HEK293T (cell line): ENCODE measurements at regions of chr6 and their contacts with region 1.

Region 1: GRCh38 chr6:53956068-53956711 is 155.1 kb upstream of the MLIP start:
- DNase-seq: peak; percentile 82

Region 2: DNA sequence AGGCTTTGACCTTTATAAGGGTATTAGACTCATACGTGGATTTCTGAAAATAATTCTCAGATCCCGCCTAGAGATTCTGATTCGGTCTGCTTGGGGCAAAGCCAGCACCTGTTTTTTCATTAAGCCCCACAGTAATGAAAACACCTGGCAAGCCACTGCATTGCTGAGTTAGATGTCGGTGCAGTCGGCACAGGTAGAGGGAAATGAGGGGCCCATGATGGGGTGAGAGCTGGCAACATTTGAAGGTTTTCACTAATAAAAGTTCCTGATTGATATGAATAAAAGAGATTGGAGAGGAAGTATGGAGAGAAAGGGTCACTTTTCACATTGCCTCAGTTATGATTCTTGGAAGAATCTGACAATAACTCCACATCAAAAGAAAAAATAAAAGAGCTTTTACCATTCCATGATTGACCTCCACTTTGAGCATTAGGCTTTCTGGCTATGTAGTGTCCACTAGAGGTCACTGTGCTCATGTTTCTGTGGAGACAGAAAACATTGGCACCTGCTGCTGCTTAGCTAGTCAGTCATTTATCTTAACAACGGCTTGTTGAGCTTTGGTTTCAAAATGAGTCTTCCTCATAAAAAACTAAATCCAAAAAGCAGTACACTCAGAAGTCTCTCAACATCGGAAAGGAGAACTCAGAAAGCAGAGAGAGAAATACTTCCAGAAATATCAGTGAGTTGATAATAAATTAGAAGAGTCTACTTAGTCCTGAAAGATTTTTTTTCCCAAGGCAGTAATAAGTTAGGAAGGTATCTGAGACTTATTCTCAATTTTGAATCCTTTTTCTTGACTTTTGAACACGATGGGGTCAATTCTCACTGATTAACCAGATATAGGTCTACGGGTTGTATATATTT is 237.4 kb before region 1 on chr6:
- CTCF ChIA-PET with region 1: interaction called, 19 read pairs
- POLR2A ChIA-PET with region 1: interaction called, 4 read pairs
- DNase-seq: peak; percentile 61

Region 3: GRCh38 chr6:53725791-53726431 is 230.3 kb before region 1 on chr6:
- CTCF ChIA-PET with region 1: interaction called, 24 read pairs
- POLR2A ChIA-PET with region 1: interaction called, 3 read pairs
- DNase-seq: peak; percentile 85

Region 4: DNA sequence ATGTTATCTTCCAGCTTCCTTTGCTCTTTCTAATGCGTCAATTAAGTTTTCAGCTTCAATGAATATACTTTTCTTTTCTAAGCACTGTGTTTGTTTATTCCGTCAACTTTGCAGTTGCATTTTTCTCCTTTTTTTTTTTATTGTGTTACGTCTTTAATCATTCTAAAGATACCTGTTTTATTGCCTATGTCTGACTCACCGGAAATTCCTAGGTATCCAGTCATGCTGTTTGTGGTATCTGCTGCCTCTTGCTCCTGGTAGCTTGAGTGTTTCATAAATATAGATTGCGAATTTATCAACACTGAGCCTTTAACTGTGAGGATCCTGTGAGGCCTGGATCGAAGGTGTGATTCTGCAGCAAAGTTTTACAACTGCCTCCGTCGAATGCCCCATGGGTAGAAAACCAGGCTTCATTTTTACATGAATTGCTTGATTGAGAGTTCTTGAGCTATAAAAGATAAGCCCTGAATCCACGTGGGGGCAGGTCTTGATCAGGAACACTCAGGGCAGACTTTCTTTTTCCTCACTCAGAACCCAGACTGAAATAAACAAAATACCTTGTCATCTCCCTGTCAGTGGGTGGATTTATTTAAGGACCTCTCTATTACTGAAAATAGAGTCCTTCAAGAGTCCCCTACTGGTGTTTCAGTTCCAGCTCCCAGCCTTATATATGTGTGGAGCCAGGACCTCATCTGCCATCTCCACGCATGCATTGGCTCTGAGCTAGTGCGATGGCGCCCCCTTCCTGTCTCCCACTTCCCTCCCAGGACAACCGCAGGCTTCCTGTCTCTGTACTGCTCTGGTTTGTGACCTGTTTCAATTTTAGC is 221.5 kb before region 1 on chr6:
- CTCF ChIA-PET with region 1: interaction called, 14 read pairs
- POLR2A ChIA-PET with region 1: no interaction called
- DNase-seq: peak; percentile 50

Region 5: DNA sequence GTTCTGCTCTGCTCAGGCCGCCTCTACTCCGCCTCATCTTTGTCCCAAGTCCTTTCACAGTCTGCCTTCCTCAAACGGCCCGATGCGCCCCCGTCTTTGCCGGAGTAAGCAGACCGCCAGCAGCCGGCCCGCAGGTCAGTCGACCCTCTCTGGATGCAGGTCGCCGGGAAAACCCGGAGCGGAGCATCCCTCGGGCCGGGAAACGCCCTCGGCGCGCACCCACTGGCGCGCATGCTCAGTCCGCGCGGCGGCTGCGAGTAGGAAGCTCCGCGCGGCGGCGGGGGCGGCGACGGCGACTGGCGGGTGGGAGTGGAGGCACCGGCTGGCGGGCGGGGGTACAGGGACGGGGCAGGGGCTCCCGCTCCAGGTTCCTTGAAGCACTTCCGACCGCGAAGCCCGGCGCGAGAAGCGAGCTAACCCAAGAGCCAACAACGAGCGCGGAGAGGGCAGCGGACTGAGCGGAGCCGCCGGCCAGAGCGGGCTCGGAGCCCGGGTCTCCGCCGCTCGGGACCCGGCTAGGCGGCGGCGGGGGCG is 161.4 kb before region 1 on chr6 and contains the start of gene LRRC1:
- CTCF ChIA-PET with region 1: interaction called, 27 read pairs
- POLR2A ChIA-PET with region 1: interaction called, 15 read pairs
- DNase-seq: peak; percentile 91